SK-N-SH (cell line): ENCODE measurements at regions of chr17 and their contacts with region 1.

Region 1: DNA sequence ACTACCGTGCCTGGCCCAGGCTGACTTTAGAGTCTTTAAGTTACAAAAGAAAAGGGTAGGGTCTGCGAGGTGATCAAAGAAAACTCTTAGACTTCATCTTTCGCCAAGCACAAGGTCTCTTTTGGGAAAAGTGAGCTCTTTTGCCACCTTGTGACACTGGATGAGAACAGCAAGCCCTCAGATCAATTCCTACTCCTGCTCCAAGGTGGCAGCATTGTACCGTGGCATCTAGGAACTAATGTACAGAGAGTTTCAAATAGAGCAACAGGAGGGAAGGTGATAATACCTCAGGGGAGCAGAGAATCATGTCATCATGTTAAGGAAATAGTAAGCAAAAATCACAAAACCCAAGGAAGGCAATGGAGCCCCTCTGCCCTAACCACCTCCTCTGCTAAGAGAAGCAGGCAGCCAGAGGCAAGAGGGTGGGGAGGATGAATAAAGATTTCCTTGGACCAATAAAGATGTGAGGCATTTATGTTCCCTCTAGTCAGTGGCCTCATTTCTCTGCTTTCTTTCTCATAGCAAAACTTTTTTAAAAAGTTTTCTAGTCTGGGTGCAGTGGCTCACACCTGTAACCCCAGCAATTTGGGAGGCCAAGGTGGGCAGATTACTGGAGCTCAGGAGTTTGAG is 2.1 kb upstream of the C17orf78 start:
- DNase-seq: peak; percentile 74
- H3K4me3 ChIP-seq: peak overlapping the region in 1 of 2 experiments; percentile 28; a peak in 1 of 4 replicates
- H3K27ac ChIP-seq: no peak overlapping the region
- H3K4me1 ChIP-seq: no peaks in the 10 kb centered on the region
- H3K27me3 ChIP-seq: no peaks in the 10 kb centered on the region
- CTCF ChIP-seq: peak; percentile 98
- EP300 ChIP-seq: no peak
- RAD21 ChIP-seq: peak; percentile 99

Region 2: DNA sequence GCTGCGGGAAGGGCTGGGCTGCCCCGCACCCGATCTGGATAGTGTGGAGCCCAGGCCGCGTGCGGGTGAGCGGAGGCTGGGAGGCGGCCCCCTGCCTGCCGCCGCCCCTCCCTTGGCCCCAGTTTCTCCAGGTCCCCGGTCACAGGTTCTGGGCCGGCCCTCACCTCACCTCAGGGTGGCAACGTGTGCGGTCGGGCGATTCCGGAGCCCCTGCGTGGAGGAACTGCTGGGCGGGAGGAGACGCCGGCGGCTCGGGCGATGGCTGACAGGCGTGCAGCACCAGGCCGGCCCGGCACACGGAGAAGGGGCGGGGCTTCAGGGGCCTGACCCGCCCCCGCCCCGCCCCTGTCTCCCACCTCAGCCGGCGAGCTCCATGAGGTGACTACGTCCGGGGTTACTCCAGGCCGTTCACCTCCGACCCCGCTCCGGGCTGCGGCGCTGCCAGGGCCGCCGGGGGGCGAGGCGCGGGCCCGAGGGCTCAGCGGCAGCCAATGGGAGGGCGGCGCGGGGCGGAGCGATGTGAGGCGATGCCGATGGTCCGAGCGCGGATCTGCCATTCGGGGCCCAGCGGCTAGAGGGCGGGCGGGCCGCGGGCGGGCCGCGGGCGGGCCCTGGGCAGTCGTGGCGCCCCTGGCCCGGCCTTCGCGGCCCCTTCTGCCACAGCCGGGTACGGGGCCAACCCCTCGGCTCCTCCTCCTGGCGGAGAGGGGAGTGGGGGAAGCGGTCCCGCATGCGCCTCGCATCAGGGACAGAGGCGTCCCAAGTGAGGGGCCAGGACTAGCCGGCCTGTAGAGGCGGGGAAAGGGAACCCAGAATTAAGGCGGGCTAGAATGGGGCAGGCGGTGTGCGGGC is 14.6 kb before region 1 on chr17:
- CTCF ChIA-PET with region 1: interaction called, 35 read pairs
- POLR2A ChIA-PET with region 1: interaction called, 3 read pairs
- DNase-seq: peak; percentile 95
- H3K4me3 ChIP-seq: peak overlapping the region; percentile 75 to 78
- H3K27ac ChIP-seq: peak overlapping the region; percentile 66 to 72; a peak in 3 of 4 replicates
- H3K4me1 ChIP-seq: peaks cover 0 to 13% of the 10 kb centered on the region in 2 experiments; a peak in 2 of 4 replicates
- H3K27me3 ChIP-seq: no peaks in the 10 kb centered on the region
- CTCF ChIP-seq: peak; percentile 28; the same call in 1 of the 2 replicates
- EP300 ChIP-seq: no peak
- RAD21 ChIP-seq: no peak

Region 3: DNA sequence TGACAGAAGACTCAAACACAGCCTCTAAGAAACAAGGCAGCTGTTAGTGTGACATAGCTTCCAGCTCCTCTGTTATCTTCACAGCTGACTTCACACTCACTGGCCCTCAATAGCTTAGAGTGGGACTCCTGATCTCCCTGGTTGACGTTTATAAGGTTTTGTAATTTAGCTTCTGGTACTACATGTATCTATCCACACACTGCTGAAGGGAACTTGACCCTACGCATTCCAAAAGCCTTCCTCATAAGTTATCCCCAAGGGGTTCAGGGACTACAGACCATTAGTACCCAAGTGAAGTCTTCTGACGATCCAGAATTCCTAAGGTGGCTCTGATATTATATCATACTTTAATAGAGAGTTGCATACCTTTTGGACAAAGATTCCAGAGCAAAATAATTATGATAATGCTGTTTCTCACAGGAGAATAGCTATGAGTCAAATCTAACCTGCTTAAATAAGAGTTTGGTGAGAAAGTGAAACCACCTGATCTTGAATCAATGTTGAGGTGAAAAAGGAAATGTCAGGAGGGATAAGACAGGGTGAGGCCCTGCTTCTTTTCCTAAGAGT is 18.5 kb after region 1 on chr17:
- CTCF ChIA-PET with region 1: interaction called, 101 read pairs
- POLR2A ChIA-PET with region 1: no interaction called
- DNase-seq: no peak
- H3K4me3 ChIP-seq: peak overlapping the region in 1 of 2 experiments; percentile 5; a peak in 1 of 4 replicates
- H3K27ac ChIP-seq: peak overlapping the region in 1 of 2 experiments; percentile 55; a peak in 3 of 4 replicates
- H3K4me1 ChIP-seq: peaks cover 0 to 27% of the 10 kb centered on the region in 2 experiments; a peak in 3 of 4 replicates
- H3K27me3 ChIP-seq: no peaks in the 10 kb centered on the region
- CTCF ChIP-seq: no peak
- EP300 ChIP-seq: no peak
- RAD21 ChIP-seq: no peak

Region 4: DNA sequence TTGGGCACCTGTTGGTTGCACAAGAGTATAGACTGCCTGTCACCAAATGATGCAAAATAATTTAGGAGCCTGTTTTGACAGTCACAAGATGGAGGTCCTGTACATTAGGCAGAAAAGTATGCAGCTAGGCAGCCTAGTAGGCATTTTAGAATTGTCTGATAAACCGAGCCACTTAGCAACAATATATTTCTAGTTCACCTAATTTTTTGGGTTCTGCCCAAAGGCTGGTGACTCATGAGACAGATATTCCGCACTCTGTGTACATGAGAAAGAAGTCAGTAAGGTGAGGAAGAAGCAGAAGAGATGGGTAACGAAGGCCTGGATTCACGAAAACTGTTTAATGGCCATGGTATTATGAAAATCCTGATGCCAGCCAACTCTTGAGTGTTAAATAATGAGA is 25.8 kb after region 1 on chr17:
- CTCF ChIA-PET with region 1: interaction called, 20 read pairs
- POLR2A ChIA-PET with region 1: no interaction called
- DNase-seq: no peak
- H3K4me3 ChIP-seq: no peak overlapping the region
- H3K27ac ChIP-seq: no peak overlapping the region
- H3K4me1 ChIP-seq: no peaks in the 10 kb centered on the region
- H3K27me3 ChIP-seq: no peaks in the 10 kb centered on the region
- CTCF ChIP-seq: no peak
- EP300 ChIP-seq: no peak
- RAD21 ChIP-seq: no peak

Region 5: GRCh38 chr17:37543637-37544052 is 170.0 kb after region 1 on chr17:
- CTCF ChIA-PET with region 1: no interaction called
- POLR2A ChIA-PET with region 1: no interaction called
- DNase-seq: no peak
- H3K4me3 ChIP-seq: no peak overlapping the region
- H3K27ac ChIP-seq: no peak overlapping the region
- H3K4me1 ChIP-seq: peaks cover 0 to 11% of the 10 kb centered on the region in 2 experiments; a peak in 2 of 4 replicates
- H3K27me3 ChIP-seq: no peaks in the 10 kb centered on the region
- CTCF ChIP-seq: no peak
- EP300 ChIP-seq: no peak
- RAD21 ChIP-seq: no peak